Dorsolateral prefrontal cortex (tissue), 120 donors: ENCODE measurements at regions of chr11 and their contacts with region 1.

Region 1: DNA sequence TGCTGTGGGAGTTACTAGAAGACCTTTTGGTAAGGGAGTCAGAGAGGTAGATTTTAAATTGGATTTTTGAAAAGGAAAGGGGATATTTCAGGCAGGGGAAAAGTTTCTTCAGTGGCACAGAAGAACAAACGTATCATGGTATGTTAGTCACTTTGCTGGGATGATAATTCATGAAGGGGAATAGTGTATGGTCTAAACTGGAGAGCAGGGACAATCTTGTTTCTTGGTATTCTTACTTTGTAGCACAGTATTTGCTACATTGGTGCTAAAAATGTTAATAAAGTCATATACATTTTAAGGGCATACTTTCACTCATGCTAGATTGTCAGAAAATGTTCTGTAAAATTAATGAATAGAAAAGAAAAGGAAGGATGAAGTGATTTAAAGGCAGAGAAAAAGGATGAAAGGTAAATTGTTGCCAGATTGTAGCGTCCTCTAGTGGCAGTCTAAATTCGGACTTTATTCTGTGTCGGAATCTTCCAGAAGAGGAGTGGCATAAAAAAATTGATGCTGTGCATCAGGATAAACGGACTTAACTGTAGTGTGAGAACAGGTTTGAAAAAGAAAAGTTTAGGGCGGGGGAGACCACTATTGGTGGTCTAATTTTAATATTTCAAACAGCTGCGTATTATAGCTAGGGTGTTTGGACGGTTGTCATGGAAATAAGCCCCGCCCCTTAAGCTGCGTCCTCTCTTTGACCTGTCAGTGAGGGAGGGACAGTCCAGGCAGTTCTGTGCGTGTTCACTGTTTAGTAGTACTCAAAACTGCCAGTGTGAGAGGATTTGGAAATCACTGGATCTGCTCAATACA is at the start of gene BCO2:
- DNase-seq: peak; percentile 32 to 90 (median 81)
- H3K4me3 ChIP-seq: peak within 1 kb of the TSS; percentile 24 to 79 (median 63)
- H3K27ac ChIP-seq: peak within 1 kb of the TSS; percentile 13 to 93 (median 82)
- H3K27me3 ChIP-seq: no peaks in the 10 kb centered on the region
- CTCF ChIP-seq: peak; percentile 68 to 98 (median 91)
- total RNA-seq, gene BCO2: 14.1 to 49.0 (median 26.6) TPM

Region 2: GRCh38 chr11:112113539-112114457 is 61.2 kb before region 1 on chr11:
- intact Hi-C with region 1: loop called (anchors 2 to 5 kb)
- DNase-seq: no peak
- H3K4me3 ChIP-seq: peak overlapping the region in 12 of 59 donors; percentile 4 to 43 (median 16)
- H3K27ac ChIP-seq: peak overlapping the region in 4 of 59 donors; percentile 2 to 32 (median 18)
- H3K27me3 ChIP-seq: no peaks in the 10 kb centered on the region
- CTCF ChIP-seq: peak; percentile 51 to 82 (median 73)

Region 3: DNA sequence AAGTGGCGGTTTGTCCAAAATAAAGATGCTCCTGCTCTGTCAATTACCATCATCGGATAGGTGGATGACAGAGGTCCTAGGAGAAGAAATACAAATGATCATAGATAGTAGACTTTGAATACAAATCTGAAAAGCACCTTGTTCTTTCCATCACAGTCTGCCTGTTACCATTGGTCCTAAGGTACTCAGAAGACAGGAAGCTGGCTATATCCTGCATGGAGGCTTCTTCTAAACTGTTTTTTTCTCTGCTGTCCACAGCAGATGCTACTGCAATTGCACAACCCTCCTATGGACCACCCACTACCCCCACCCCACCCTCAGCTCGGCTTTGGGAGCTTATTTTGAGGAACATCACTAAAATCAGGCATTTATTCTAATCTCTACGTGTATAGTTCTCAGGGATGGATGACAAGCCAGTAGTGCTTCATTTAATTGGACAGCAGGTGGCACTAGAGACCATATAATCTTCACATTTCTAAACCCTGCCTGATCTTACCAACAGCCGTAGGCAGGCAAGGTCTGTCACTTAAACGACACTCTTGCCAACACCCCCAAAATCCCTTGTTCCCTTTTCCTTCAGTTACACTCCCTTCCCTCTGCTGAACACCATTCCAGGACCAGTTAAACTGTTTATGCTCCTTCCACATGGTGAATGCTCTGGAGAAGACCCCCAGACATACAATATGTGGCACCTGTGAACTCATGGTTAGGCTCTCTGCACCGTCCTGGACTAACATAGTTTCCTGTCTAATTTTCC is 44.7 kb after region 1 on chr11:
- intact Hi-C with region 1: loop called in 1 of 2 experiments (anchors 5 kb)
- DNase-seq: peak in 2 of 10 donors; percentile 38 to 50
- H3K4me3 ChIP-seq: no peak overlapping the region
- H3K27ac ChIP-seq: peak overlapping the region in 13 of 59 donors; percentile 4 to 63 (median 36)
- H3K27me3 ChIP-seq: no peaks in the 10 kb centered on the region
- CTCF ChIP-seq: peak; percentile 56 to 92 (median 82)